ENCODE measurements at regions of chr6 and their contacts with region 1.

Region 1: GRCh38 chr6:93806409-93807270 is 387.3 kb upstream of the EPHA7 start:
- DNase-seq: no peak
- H3K4me3 ChIP-seq: no peak overlapping the region
- H3K27ac ChIP-seq: no peak overlapping the region
- H3K4me1 ChIP-seq: no peaks in the 10 kb centered on the region
- H3K27me3 ChIP-seq: no peaks in the 10 kb centered on the region
- CTCF ChIP-seq: no peak
- EP300 ChIP-seq: no peak
- POLR2A ChIP-seq: peak; percentile 31 to 67; a peak in 2 of 3 replicates
- RAD21 ChIP-seq: no peak

Region 2: DNA sequence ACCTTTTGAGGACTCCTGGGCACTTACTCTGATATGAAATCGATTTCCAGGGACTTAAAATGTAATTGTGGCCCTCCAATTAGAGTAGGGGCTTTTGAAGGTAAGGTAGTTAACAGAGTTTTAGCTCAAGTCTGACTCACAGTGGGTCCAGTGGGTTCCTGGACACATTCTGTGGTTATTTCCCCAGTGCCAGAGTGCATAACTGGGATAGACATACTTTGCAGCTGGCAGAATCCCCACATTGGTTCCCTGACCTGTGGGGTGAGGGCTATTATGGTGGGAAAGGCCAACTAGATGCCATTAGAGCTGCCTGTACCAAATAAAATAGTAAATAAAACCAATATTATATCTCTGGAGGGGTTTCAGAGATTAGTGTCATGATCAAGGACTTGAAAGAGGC is 143.5 kb before region 1 on chr6:
- CTCF ChIA-PET with region 1: no interaction called
- POLR2A ChIA-PET with region 1: no interaction called
- DNase-seq: no peak
- H3K4me3 ChIP-seq: no peak overlapping the region
- H3K27ac ChIP-seq: no peak overlapping the region
- H3K4me1 ChIP-seq: peaks cover 0 to 5% (median 0%) of the 10 kb centered on the region in 4 experiments; a peak in 1 of 7 replicates
- H3K27me3 ChIP-seq: no peaks in the 10 kb centered on the region
- CTCF ChIP-seq: no peak
- EP300 ChIP-seq: no peak
- POLR2A ChIP-seq: no peak
- RAD21 ChIP-seq: no peak

Region 3: DNA sequence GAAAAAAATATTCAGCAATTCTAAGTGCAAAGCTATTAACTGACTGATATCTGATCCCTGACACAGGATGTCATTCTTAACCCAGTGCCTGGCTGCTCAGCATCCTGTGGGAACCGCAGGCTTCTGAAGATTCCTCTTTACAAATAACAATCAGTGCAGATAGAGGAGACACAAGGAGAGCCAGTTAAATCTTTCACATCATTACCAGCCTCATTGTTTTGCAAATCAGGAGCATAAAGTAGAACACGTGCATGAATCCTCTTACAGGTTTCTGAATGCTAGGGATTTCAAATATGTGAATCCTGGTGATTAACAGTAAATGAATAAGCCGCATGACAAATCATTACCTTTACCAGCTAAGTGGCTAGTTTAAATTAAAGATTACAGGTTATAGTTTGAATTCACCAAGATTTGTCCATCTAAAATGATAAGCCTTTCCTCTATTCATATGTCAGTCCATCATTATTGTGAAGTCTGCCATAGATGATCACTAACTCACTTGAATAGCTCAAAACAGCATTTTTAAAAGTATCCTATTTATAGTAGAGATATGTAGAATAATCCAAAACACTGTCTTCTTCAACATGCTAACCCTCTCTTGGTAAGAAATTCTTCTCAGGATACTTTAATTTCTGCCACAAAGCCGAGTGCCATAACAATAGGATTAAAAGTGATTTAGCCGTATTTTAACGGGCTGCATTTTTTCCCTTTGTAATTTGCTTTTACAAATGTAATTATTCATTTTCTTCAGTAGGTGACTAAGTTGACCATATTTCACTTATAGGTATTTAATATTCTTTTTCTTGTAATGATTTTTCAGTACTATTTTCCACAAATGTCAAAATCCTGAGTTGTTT is 19.9 kb before region 1 on chr6:
- CTCF ChIA-PET with region 1: interaction called, 3 read pairs
- POLR2A ChIA-PET with region 1: interaction called, 12 read pairs
- DNase-seq: peak in 1 of 2 experiments; percentile 76
- H3K4me3 ChIP-seq: peak overlapping the region in 1 of 4 experiments; percentile 35; a peak in 2 of 8 replicates
- H3K27ac ChIP-seq: peak overlapping the region; percentile 49; the same call in 1 of the 2 replicates
- H3K4me1 ChIP-seq: peaks cover 0 to 20% (median 13%) of the 10 kb centered on the region in 4 experiments; a peak in 5 of 7 replicates
- H3K27me3 ChIP-seq: no peaks in the 10 kb centered on the region
- CTCF ChIP-seq: no peak
- EP300 ChIP-seq: peak in 1 of 2 experiments; percentile 94; a peak in 2 of 3 replicates
- POLR2A ChIP-seq: no peak
- RAD21 ChIP-seq: 0 out of 4 replicates have a peak, but pooled peaks of 1 of the 2 experiments have one; percentile 5

Region 4: GRCh38 chr6:93819189-93819588 is 12.5 kb after region 1 on chr6:
- CTCF ChIA-PET with region 1: interaction called, 3 read pairs
- POLR2A ChIA-PET with region 1: interaction called, 28 read pairs
- DNase-seq: no peak
- H3K4me3 ChIP-seq: no peak overlapping the region
- H3K27ac ChIP-seq: no peak overlapping the region
- H3K4me1 ChIP-seq: peaks cover 0 to 8% (median 1%) of the 10 kb centered on the region in 4 experiments; a peak in 2 of 7 replicates
- H3K27me3 ChIP-seq: no peaks in the 10 kb centered on the region
- CTCF ChIP-seq: no peak
- EP300 ChIP-seq: no peak
- POLR2A ChIP-seq: peak; percentile 28 to 76; a peak in 2 of 3 replicates
- RAD21 ChIP-seq: no peak